ENCODE measurements at regions of chr1 and their contacts with region 1.

Region 1: GRCh38 chr1:23098463-23099170 is 70.0 kb downstream of the LUZP1 start:
- DNase-seq: peak; percentile 73 to 84 (median 75)
- ATAC-seq: peak; percentile 85
- H3K4me3 ChIP-seq: no peak overlapping the region
- H3K27ac ChIP-seq: no peak overlapping the region
- H3K4me1 ChIP-seq: peaks cover 0 to 24% of the 10 kb centered on the region in 2 experiments; a peak in 4 of 5 replicates
- H3K27me3 ChIP-seq: no peaks in the 10 kb centered on the region
- CTCF ChIP-seq: peak; percentile 93 to 99 (median 97)
- EP300 ChIP-seq: no peak
- POLR2A ChIP-seq: no peak
- RAD21 ChIP-seq: peak; percentile 98 to 100

Region 2: DNA sequence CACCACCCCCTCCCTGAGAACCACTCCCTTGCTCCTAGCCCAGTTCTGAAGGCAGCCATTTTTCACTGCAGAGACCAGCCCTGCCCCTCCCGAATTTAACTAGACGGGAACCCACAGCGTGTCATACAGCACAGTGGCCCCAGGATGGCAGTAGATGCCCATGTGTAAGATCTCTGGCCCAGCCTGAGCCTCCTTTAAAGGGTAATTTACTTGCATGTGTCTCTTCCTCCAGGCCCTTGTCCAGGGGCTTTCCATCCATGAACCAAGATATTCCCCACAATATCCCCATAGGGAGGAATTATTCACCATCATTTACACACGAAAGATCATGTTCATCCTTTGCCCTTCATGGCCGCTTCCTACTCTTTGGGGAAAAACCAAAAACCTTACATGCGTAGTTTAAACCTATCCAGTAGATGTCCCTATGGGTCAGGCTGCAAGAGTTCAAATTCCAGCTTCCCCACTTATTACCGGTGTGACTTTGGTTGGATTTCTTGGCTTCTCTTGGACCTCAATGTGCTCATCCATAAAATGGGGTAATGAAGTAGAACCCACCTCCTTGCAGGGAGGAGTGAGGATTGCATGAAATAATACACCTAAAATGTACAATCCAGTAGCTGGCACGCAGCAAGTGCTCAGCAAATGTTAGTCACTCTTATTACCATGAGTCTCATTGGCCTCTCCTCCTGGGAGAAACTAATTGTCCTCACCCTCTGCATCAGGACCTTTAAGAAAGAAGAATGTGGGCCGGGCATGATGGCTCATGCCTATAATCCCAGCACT is 122.0 kb before region 1 on chr1:
- CTCF ChIA-PET with region 1: interaction called, 21 read pairs
- POLR2A ChIA-PET with region 1: no interaction called
- in situ Hi-C with region 1: loop called (anchors 10 kb)
- intact Hi-C with region 1: loop called (anchors 1 kb)
- DNase-seq: peak; percentile 84 to 87 (median 86)
- ATAC-seq: peak; percentile 97
- H3K4me3 ChIP-seq: no peak overlapping the region
- H3K27ac ChIP-seq: no peak overlapping the region
- H3K4me1 ChIP-seq: peaks cover 0 to 4% of the 10 kb centered on the region in 2 experiments; a peak in 2 of 5 replicates
- H3K27me3 ChIP-seq: peaks cover 8 to 20% of the 10 kb centered on the region in 2 experiments
- CTCF ChIP-seq: peak; percentile 86 to 99 (median 91)
- EP300 ChIP-seq: no peak
- POLR2A ChIP-seq: no peak
- RAD21 ChIP-seq: peak; percentile 97

Region 3: GRCh38 chr1:23114424-23115079 is 15.9 kb after region 1 on chr1:
- CTCF ChIA-PET with region 1: no interaction called
- POLR2A ChIA-PET with region 1: interaction called, 15 read pairs
- in situ Hi-C with region 1: no loop called
- intact Hi-C with region 1: no loop called
- DNase-seq: peak in 1 of 4 experiments; percentile 34
- ATAC-seq: peak; percentile 9; the same call in 1 of the 3 replicates
- H3K4me3 ChIP-seq: no peak overlapping the region
- H3K27ac ChIP-seq: peak overlapping the region; percentile 72
- H3K4me1 ChIP-seq: peaks cover 41 to 68% of the 10 kb centered on the region in 2 experiments
- H3K27me3 ChIP-seq: no peaks in the 10 kb centered on the region
- CTCF ChIP-seq: no peak
- EP300 ChIP-seq: no peak
- POLR2A ChIP-seq: no peak
- RAD21 ChIP-seq: no peak

Region 4: DNA sequence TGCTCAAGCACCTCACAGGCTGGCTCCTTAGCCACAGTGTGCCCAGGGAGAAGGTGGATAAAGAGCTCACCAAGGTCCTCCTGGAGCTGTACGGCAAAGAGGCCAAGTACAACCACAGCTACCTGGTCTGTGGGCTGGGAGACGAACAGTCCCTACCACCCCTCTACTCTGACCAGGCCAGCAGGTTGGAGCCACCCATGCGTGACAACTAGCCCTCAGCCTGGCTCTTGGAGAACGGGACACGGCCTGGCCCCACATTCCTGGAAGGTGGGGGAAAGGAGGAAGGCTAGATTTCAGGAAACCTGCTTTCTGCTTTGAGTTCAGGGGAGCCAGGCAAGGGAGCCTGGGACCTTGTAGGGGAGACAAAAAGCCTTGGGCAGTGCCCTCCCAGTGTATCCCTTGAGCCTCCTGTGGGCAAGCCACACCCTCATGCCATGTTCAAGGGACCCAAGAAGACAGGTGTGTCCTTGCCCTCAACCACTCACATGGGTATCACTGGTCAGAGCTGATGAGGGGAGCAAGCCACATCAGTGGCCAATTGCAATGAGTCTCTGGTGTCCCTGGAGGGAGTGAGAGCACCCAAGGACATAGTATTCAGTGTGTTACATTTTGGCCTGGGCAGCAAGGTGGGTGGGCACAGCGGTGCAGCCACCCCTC is 42.5 kb after region 1 on chr1:
- CTCF ChIA-PET with region 1: interaction called, 3 read pairs
- POLR2A ChIA-PET with region 1: interaction called, 3 read pairs
- in situ Hi-C with region 1: no loop called
- intact Hi-C with region 1: loop called (anchors 5 kb)
- DNase-seq: no peak
- ATAC-seq: peak; percentile 49
- H3K4me3 ChIP-seq: no peak overlapping the region
- H3K27ac ChIP-seq: no peak overlapping the region
- H3K4me1 ChIP-seq: no peaks in the 10 kb centered on the region
- H3K27me3 ChIP-seq: no peaks in the 10 kb centered on the region
- CTCF ChIP-seq: no peak
- EP300 ChIP-seq: no peak
- POLR2A ChIP-seq: no peak
- RAD21 ChIP-seq: no peak

Region 5: GRCh38 chr1:23184212-23184934 is 85.8 kb after region 1 on chr1:
- CTCF ChIA-PET with region 1: interaction called, 141 read pairs
- POLR2A ChIA-PET with region 1: interaction called, 19 read pairs
- in situ Hi-C with region 1: loop called (anchors 5 kb)
- intact Hi-C with region 1: loop called (anchors 1 kb)
- DNase-seq: peak; percentile 66 to 72 (median 67)
- ATAC-seq: peak; percentile 73
- H3K4me3 ChIP-seq: no peak overlapping the region
- H3K27ac ChIP-seq: no peak overlapping the region
- H3K4me1 ChIP-seq: no peaks in the 10 kb centered on the region; a peak in 2 of 5 replicates
- H3K27me3 ChIP-seq: peaks cover 3 to 4% of the 10 kb centered on the region in 2 experiments; a peak in 2 of 5 replicates
- CTCF ChIP-seq: peak; percentile 81 to 90 (median 83)
- EP300 ChIP-seq: no peak
- POLR2A ChIP-seq: no peak
- RAD21 ChIP-seq: peak; percentile 98 to 99

Region 6: GRCh38 chr1:23273450-23274133 is 175.0 kb after region 1 on chr1:
- CTCF ChIA-PET with region 1: no interaction called
- POLR2A ChIA-PET with region 1: interaction called, 4 read pairs
- in situ Hi-C with region 1: loop called (anchors 5 kb)
- intact Hi-C with region 1: loop called (anchors 10 kb)
- DNase-seq: peak in 2 of 4 experiments; percentile 22 to 49
- ATAC-seq: no peak
- H3K4me3 ChIP-seq: no peak overlapping the region
- H3K27ac ChIP-seq: no peak overlapping the region
- H3K4me1 ChIP-seq: peaks cover 0 to 6% of the 10 kb centered on the region in 2 experiments; a peak in 3 of 5 replicates
- H3K27me3 ChIP-seq: no peaks in the 10 kb centered on the region
- CTCF ChIP-seq: no peak
- EP300 ChIP-seq: no peak
- POLR2A ChIP-seq: no peak
- RAD21 ChIP-seq: no peak

Region 7: GRCh38 chr1:23282957-23283356 is 184.3 kb after region 1 on chr1:
- CTCF ChIA-PET with region 1: no interaction called
- POLR2A ChIA-PET with region 1: interaction called, 3 read pairs
- in situ Hi-C with region 1: loop called (anchors 5 kb)
- intact Hi-C with region 1: loop called (anchors 10 kb)
- DNase-seq: no peak
- ATAC-seq: no peak
- H3K4me3 ChIP-seq: no peak overlapping the region
- H3K27ac ChIP-seq: no peak overlapping the region
- H3K4me1 ChIP-seq: no peaks in the 10 kb centered on the region
- H3K27me3 ChIP-seq: no peaks in the 10 kb centered on the region
- CTCF ChIP-seq: no peak
- EP300 ChIP-seq: no peak
- POLR2A ChIP-seq: no peak
- RAD21 ChIP-seq: no peak

Measured in K562 (cell line).